ENCODE measurements at regions of chr5 and their contacts with region 1.

Region 1: DNA sequence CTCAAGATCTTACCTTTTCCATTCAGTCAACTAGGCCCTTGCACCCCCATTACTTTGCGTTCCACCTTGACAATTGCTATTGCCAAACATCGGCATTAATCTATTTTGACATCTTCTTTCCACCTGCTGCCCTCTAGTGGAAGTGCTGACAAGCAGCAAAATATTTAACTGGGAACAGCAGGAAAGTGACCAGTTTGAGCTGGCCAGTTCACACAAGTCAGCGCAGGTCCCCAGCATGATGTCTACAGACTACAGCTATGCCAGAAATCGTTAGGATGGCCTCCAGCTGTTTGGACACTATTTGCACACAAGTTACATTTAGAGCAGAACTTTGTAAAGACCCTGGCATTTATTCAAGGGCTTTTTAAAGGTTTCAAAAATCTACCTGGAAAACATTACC is 160.1 kb downstream of the GHR start:
- DNase-seq: peak; percentile 71
- H3K27ac ChIP-seq: no peak overlapping the region
- CTCF ChIP-seq: peak; percentile 90

Region 2: GRCh38 chr5:42423285-42424165 is 159.8 kb before region 1 on chr5 and contains the start of gene GHR:
- CTCF ChIA-PET with region 1: interaction called, 12 read pairs
- POLR2A ChIA-PET with region 1: no interaction called
- DNase-seq: peak; percentile 75
- H3K27ac ChIP-seq: no peak within 1 kb of the TSS; the same call in 1 of the 2 replicates
- CTCF ChIP-seq: peak; percentile 76

Region 3: GRCh38 chr5:42606464-42606881 is 23.2 kb after region 1 on chr5:
- CTCF ChIA-PET with region 1: no interaction called
- POLR2A ChIA-PET with region 1: no interaction called
- DNase-seq: no peak
- H3K27ac ChIP-seq: no peak overlapping the region
- CTCF ChIP-seq: no peak

Region 4: DNA sequence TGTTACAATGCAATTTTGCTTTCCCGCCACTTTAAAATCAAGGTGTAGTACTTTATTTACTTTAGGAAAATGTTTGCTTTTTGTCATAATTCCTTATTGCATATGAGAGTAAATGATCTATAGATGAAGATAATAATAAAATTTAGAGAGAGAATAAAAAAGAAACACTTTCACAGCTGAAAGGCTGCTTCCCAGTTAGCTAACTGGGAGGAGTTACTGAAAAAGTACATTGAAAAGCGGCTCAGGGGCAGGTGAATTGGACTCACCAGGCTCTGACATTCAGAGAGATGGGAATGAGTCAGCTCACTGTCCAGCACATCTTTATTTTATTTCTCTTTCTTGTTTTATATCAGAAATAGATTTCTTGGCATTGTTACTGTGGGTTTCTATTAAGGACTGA is 41.6 kb after region 1 on chr5:
- CTCF ChIA-PET with region 1: no interaction called
- POLR2A ChIA-PET with region 1: no interaction called
- DNase-seq: no peak
- H3K27ac ChIP-seq: no peak overlapping the region
- CTCF ChIP-seq: no peak

Region 5: DNA sequence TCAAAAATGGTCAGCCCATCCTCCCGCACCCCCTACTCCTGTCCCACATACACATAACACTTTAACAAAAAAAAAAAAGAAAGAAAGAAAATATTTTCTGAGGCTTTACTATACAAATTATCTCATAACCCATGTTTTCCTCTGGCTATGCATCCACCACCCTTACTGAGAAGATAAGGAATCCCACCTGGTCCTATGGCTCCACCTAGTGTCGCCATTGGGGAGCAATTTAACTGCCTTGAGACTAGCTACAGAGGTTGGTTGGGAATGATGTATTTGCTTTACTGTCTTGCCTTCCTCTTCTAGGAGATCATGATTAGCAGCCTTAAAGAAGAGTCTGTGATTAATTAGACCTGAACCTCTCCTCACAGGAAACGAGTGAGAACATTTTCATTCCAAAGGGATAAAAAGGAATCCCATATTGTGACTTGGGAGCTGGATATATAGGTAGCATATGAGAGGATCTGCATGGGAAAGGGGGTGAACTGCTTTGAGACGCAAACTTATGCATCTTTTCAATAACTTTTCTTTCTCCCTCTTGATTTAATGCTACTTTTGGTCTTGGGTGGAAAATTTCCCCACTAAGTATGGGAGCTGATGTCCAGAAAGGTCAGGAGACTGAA is 306.1 kb after region 1 on chr5:
- CTCF ChIA-PET with region 1: interaction called, 11 read pairs
- POLR2A ChIA-PET with region 1: no interaction called
- DNase-seq: peak; percentile 78
- H3K27ac ChIP-seq: no peak overlapping the region
- CTCF ChIP-seq: peak; percentile 98

Measured in RWPE1 (cell line).